ENCODE measurements at regions of chrX and their contacts with region 1.

Region 1: DNA sequence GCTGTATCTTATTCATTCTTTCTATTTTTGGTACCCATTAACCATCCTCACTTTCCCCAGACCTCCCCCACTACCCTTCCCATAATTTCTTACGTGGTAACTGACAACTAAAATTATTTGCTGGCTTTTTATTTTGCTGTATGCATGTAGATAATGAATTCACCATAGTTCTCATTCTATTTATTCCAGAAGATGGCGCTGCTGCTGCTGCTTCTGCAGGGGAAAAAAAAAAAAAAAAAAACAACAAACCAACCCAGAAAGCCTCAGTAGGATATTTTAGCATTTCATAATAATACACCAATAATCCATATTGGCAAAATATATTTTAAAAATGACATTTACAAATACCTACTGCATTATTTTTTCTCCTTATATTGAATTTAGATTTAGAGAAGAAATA is 416.6 kb upstream of the MAGEB18 start:
- DNase-seq: peak; percentile 40
- H3K4me3 ChIP-seq: no peak overlapping the region
- H3K27ac ChIP-seq: no peak overlapping the region
- H3K4me1 ChIP-seq: no peaks in the 10 kb centered on the region
- H3K27me3 ChIP-seq: no peaks in the 10 kb centered on the region
- CTCF ChIP-seq: peak; percentile 12 to 23
- POLR2A ChIP-seq: no peak

Region 2: GRCh38 chrX:25968920-25969319 is 247.4 kb after region 1 on chrX:
- CTCF ChIA-PET with region 1: interaction called, 4 read pairs
- POLR2A ChIA-PET with region 1: no interaction called
- dilution Hi-C with region 1: no loop called
- intact Hi-C with region 1: loop called (anchors 1 kb)
- DNase-seq: peak; percentile 33
- H3K4me3 ChIP-seq: no peak overlapping the region
- H3K27ac ChIP-seq: no peak overlapping the region
- H3K4me1 ChIP-seq: no peaks in the 10 kb centered on the region
- H3K27me3 ChIP-seq: no peaks in the 10 kb centered on the region
- CTCF ChIP-seq: peak; percentile 49 to 53
- POLR2A ChIP-seq: no peak

Region 3: GRCh38 chrX:26032111-26032912 is 310.7 kb after region 1 on chrX:
- CTCF ChIA-PET with region 1: no interaction called
- POLR2A ChIA-PET with region 1: no interaction called
- dilution Hi-C with region 1: no loop called
- intact Hi-C with region 1: loop called (anchors 5 kb)
- DNase-seq: peak; percentile 73
- H3K4me3 ChIP-seq: no peak overlapping the region
- H3K27ac ChIP-seq: no peak overlapping the region
- H3K4me1 ChIP-seq: no peaks in the 10 kb centered on the region
- H3K27me3 ChIP-seq: no peaks in the 10 kb centered on the region
- CTCF ChIP-seq: no peak
- POLR2A ChIP-seq: no peak

Region 4: DNA sequence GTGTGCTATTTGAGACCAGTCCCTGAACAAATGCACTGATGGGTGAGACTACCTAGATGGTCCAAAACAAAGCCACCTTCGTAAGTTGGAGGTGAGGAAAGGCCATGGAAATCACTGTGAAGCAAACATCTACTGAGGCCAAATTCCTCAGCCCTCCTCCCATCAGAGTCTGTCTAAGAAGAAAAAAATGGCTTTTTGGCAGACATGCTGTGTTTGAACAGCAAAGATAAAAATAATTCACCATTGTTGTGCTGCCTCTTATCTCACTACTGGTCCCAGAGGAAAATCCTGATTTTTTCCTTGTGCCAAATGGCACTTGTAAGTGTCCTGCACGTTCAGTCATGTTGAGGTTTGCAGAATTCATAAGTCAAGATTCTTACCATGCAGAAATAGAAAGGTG is 424.5 kb after region 1 on chrX:
- CTCF ChIA-PET with region 1: no interaction called
- POLR2A ChIA-PET with region 1: no interaction called
- dilution Hi-C with region 1: no loop called
- intact Hi-C with region 1: no loop called
- DNase-seq: peak; percentile 41
- H3K4me3 ChIP-seq: no peak overlapping the region
- H3K27ac ChIP-seq: no peak overlapping the region
- H3K4me1 ChIP-seq: no peaks in the 10 kb centered on the region
- H3K27me3 ChIP-seq: no peaks in the 10 kb centered on the region
- CTCF ChIP-seq: no peak
- POLR2A ChIP-seq: no peak

Region 5: GRCh38 chrX:26442340-26442739 is 720.8 kb after region 1 on chrX:
- CTCF ChIA-PET with region 1: no interaction called
- POLR2A ChIA-PET with region 1: no interaction called
- dilution Hi-C with region 1: no loop called
- intact Hi-C with region 1: loop called (anchors 5 kb)
- DNase-seq: peak; percentile 68
- H3K4me3 ChIP-seq: no peak overlapping the region
- H3K27ac ChIP-seq: no peak overlapping the region
- H3K4me1 ChIP-seq: no peaks in the 10 kb centered on the region
- H3K27me3 ChIP-seq: no peaks in the 10 kb centered on the region
- CTCF ChIP-seq: peak in 1 of 2 donors; percentile 39
- POLR2A ChIP-seq: no peak

Region 6: GRCh38 chrX:26649534-26649933 is 928.0 kb after region 1 on chrX:
- CTCF ChIA-PET with region 1: interaction called, 3 read pairs
- POLR2A ChIA-PET with region 1: no interaction called
- dilution Hi-C with region 1: no loop called
- intact Hi-C with region 1: loop called (anchors 5 kb)
- DNase-seq: no peak
- H3K4me3 ChIP-seq: no peak overlapping the region
- H3K27ac ChIP-seq: no peak overlapping the region
- H3K4me1 ChIP-seq: no peaks in the 10 kb centered on the region
- H3K27me3 ChIP-seq: no peaks in the 10 kb centered on the region
- CTCF ChIP-seq: peak; percentile 8 to 21
- POLR2A ChIP-seq: no peak

Measured in endothelial cell of umbilical vein (primary cell).